Activated naive CD8-positive, alpha-beta T cell treated with anti-CD3 and anti-CD28 coated beads, Interleukin-2, amount 10 ng/mL, durations not matched to agents 7 days and 5 days (primary cell): ENCODE measurements at regions of chr5 and their contacts with region 1.

Region 1: GRCh38 chr5:179678223-179679013 is 2.4 kb downstream of the CBY3 start:
- DNase-seq: peak; percentile 95
- ATAC-seq: peak; percentile 93
- H3K4me3 Mint-ChIP-seq: peak overlapping the region; percentile 99
- H3K27ac Mint-ChIP-seq: peak overlapping the region; percentile 99
- H3K4me1 Mint-ChIP-seq: peaks cover 16% of the 10 kb centered on the region
- H3K27me3 Mint-ChIP-seq: no peaks in the 10 kb centered on the region

Region 2: GRCh38 chr5:179697993-179698934 is 19.8 kb after region 1 on chr5:
- POLR2A ChIA-PET with region 1: interaction called, 23 read pairs
- DNase-seq: peak; percentile 98
- ATAC-seq: peak; percentile 92
- H3K4me3 Mint-ChIP-seq: peak overlapping the region; percentile 95
- H3K27ac Mint-ChIP-seq: peak overlapping the region; percentile 97
- H3K4me1 Mint-ChIP-seq: peaks cover 23% of the 10 kb centered on the region
- H3K27me3 Mint-ChIP-seq: no peaks in the 10 kb centered on the region